Naive thymus-derived CD8-positive, alpha-beta T cell (primary cell): ENCODE measurements at regions of chr6 and their contacts with region 1.

Region 1: GRCh38 chr6:30914076-30914853 is at the start of gene VARS2:
- DNase-seq: peak; percentile 66 to 94 (median 85)
- ATAC-seq: peak; percentile 96 to 97
- H3K4me3 Mint-ChIP-seq: peak within 1 kb of the TSS; percentile 86 to 97 (median 95)
- H3K27ac Mint-ChIP-seq: peak within 1 kb of the TSS; percentile 85 to 97 (median 93)
- H3K4me1 Mint-ChIP-seq: peaks cover 26 to 48% (median 34%) of the 10 kb centered on the region in 4 donors
- H3K27me3 Mint-ChIP-seq: no peaks in the 10 kb centered on the region
- polyA plus RNA-seq, gene VARS2: 14.1 to 16.3 (median 14.5) TPM

Region 2: GRCh38 chr6:30883685-30884520 is 30.4 kb before region 1 on chr6 and contains the start of gene DDR1:
- POLR2A ChIA-PET with region 1: interaction called, 22 read pairs
- DNase-seq: peak in 8 of 10 donors; percentile 23 to 71 (median 36)
- ATAC-seq: peak; percentile 62 to 65
- H3K4me3 Mint-ChIP-seq: peak within 1 kb of the TSS; percentile 70 to 94 (median 86)
- H3K27ac Mint-ChIP-seq: peak within 1 kb of the TSS; percentile 58 to 93 (median 88)
- H3K4me1 Mint-ChIP-seq: peaks cover 26 to 44% (median 34%) of the 10 kb centered on the region in 4 donors
- H3K27me3 Mint-ChIP-seq: no peaks in the 10 kb centered on the region
- polyA plus RNA-seq, gene DDR1: 0.57 to 5.4 (median 1.5) TPM

Region 3: DNA sequence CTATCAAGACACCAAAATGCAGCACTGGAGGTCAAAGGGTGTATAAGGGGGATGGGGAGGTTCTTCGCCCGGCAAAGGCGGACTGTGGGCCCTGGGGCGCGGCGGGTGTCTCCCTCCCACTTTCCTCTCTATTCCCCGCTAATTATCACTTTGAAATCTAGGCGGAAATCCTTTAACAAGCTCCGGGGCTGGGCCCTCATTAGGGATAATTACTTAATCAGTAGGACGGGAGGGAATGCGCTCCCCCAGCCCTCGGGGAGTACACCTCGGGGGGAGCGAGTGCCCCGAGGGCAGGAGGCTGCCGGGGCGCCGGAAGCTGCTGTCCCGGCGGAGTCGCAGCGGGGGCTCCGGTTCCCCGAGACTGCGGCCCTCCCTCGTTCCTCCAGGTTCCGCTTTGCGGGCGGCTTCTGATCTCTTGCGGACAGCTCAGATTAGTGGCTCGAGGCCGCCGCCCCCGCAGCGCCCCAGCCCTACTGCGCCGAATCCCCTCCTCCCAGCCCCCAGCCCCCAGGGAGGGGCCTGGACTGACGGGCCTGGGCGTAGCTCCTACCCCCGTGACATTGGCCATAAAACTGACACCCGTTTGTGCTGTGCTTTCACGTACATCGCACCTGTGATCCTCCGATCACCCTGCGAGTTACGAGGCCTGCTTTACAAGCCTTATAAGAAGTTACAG is 41.2 kb after region 1 on chr6:
- POLR2A ChIA-PET with region 1: interaction called, 11 read pairs
- DNase-seq: peak; percentile 56 to 88 (median 71)
- ATAC-seq: peak; percentile 90 to 93
- H3K4me3 Mint-ChIP-seq: peak overlapping the region; percentile 80 to 92 (median 86)
- H3K27ac Mint-ChIP-seq: peak overlapping the region; percentile 80 to 97 (median 92)
- H3K4me1 Mint-ChIP-seq: peaks cover 10 to 28% (median 21%) of the 10 kb centered on the region in 4 donors
- H3K27me3 Mint-ChIP-seq: peaks cover 0 to 24% (median 7%) of the 10 kb centered on the region in 5 donors